A549 (cell line): ENCODE measurements at regions of chr15 and their contacts with region 1.

Region 1: DNA sequence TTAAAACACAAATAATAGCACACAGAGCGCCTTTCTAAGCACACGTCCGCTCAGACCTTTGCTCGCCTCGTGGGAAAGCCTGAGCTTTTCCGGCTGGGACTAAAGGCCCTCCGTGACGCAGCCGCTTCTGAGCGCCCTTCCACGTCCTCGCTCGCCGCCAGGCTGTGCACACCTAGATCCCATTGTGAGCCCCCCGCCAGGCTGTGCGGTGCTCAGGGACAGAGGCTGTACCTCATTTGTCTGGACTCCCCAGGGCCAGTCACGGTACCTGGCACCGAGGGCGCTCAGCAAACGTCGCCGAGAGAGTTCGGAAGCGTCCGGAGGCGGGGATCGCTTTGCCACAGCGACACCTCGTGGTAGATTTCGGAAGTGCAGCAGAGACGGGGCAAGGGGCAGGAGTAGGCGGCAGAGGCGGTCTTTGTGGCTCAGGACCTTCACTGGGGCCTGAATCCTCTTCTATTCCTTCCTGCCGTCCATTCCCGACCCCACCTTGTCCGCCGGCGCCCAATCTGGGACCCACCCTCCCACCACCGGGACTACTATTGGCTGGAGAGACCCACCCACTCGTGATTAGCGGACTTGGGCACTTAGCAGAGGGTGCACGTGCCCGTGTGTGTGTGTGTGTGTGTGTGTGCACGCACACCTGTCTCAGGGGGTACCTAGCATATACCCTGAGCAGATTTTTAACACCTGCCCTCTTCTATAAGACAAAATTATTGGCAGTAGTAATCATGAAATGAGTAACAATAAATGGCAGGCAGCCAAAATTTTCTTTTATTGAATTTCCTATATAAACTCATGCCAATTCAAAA is 65.6 kb downstream of the RHCG start:
- DNase-seq: peak; percentile 80 to 96
- ATAC-seq: peak; percentile 80 to 96
- H3K4me3 ChIP-seq: peak overlapping the region; percentile 41
- H3K27ac ChIP-seq: peak overlapping the region; percentile 69 to 81
- H3K4me1 ChIP-seq: peaks cover 27% of the 10 kb centered on the region; the same call in 2 of the 3 replicates
- CTCF ChIP-seq: peak; percentile 96
- EP300 ChIP-seq: no peak
- POLR2A ChIP-seq: 0 out of 2 replicates have a peak, but pooled peaks have one; percentile 8
- RAD21 ChIP-seq: peak; percentile 83 to 85

Region 2: GRCh38 chr15:89367485-89368451 is 63.0 kb before region 1 on chr15:
- CTCF ChIA-PET with region 1: interaction called, 369 read pairs
- POLR2A ChIA-PET with region 1: no interaction called
- DNase-seq: peak; percentile 64 to 78
- ATAC-seq: peak; percentile 20 to 70; a peak in 4 of 6 replicates
- H3K4me3 ChIP-seq: peak overlapping the region; percentile 53
- H3K27ac ChIP-seq: peak overlapping the region; percentile 32 to 62; a peak in 4 of 6 replicates
- H3K4me1 ChIP-seq: peaks cover 9% of the 10 kb centered on the region; the same call in 2 of the 3 replicates
- CTCF ChIP-seq: no peak
- EP300 ChIP-seq: no peak
- POLR2A ChIP-seq: no peak
- RAD21 ChIP-seq: no peak

Region 3: DNA sequence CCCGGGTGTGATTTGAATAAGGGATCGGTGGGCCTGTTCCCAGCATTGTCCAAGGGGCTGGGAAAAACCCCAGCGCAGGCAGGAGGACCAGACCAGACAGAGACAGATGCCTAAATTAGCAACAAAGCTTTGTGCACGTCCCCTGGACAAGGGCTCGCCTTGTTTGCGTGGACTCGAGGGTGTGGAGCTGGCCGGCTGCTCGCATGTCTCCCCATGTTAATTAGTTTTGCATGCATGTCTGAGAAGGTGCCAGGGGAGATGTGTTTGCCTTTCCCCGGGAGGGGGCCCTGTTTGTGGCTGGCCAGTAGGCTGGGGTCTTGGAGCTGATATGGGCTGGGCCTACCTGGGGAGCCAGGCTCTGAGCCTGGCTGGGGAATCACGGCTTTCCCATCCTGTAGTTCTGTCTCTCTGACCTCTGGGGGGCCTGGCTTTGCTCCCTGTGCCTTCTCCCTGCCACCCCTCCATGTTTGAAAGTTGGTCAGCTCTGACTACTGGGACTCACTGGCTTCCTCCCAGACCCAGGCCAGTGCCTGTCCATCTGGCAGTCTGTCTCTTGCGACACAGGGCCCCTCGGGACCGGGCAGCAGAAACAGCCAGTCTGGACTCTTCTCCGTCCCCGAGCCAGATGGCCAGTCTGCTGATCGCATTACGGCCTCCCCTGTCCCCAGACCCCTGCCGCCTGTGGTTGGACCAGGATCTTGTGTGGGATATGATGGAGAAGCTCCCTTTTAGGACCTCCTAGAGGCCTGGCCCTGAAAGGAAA is 40.7 kb before region 1 on chr15:
- CTCF ChIA-PET with region 1: interaction called, 12 read pairs
- POLR2A ChIA-PET with region 1: no interaction called
- DNase-seq: no peak
- ATAC-seq: no peak; a peak in 2 of 6 replicates
- H3K4me3 ChIP-seq: no peak overlapping the region
- H3K27ac ChIP-seq: no peak overlapping the region
- H3K4me1 ChIP-seq: no peaks in the 10 kb centered on the region
- CTCF ChIP-seq: no peak
- EP300 ChIP-seq: no peak
- POLR2A ChIP-seq: no peak
- RAD21 ChIP-seq: no peak

Region 4: GRCh38 chr15:89399238-89400120 is 31.3 kb before region 1 on chr15:
- CTCF ChIA-PET with region 1: interaction called, 24 read pairs
- POLR2A ChIA-PET with region 1: no interaction called
- DNase-seq: peak; percentile 84 to 90
- ATAC-seq: peak; percentile 79 to 87
- H3K4me3 ChIP-seq: peak overlapping the region; percentile 79
- H3K27ac ChIP-seq: peak overlapping the region; percentile 86 to 87
- H3K4me1 ChIP-seq: peaks cover 24% of the 10 kb centered on the region
- CTCF ChIP-seq: peak; percentile 62
- EP300 ChIP-seq: no peak
- POLR2A ChIP-seq: peak; percentile 41; the same call in 1 of the 2 replicates
- RAD21 ChIP-seq: peak; percentile 31 to 37; a peak in 2 of 5 replicates

Region 5: GRCh38 chr15:89448825-89449224 is 18.1 kb after region 1 on chr15:
- CTCF ChIA-PET with region 1: interaction called, 23 read pairs
- POLR2A ChIA-PET with region 1: no interaction called
- DNase-seq: no peak
- ATAC-seq: peak in 1 of 2 experiments; percentile 9; a peak in 1 of 6 replicates
- H3K4me3 ChIP-seq: no peak overlapping the region
- H3K27ac ChIP-seq: no peak overlapping the region
- H3K4me1 ChIP-seq: peaks cover 18% of the 10 kb centered on the region; the same call in 2 of the 3 replicates
- CTCF ChIP-seq: no peak
- EP300 ChIP-seq: no peak
- POLR2A ChIP-seq: no peak
- RAD21 ChIP-seq: no peak

Region 6: DNA sequence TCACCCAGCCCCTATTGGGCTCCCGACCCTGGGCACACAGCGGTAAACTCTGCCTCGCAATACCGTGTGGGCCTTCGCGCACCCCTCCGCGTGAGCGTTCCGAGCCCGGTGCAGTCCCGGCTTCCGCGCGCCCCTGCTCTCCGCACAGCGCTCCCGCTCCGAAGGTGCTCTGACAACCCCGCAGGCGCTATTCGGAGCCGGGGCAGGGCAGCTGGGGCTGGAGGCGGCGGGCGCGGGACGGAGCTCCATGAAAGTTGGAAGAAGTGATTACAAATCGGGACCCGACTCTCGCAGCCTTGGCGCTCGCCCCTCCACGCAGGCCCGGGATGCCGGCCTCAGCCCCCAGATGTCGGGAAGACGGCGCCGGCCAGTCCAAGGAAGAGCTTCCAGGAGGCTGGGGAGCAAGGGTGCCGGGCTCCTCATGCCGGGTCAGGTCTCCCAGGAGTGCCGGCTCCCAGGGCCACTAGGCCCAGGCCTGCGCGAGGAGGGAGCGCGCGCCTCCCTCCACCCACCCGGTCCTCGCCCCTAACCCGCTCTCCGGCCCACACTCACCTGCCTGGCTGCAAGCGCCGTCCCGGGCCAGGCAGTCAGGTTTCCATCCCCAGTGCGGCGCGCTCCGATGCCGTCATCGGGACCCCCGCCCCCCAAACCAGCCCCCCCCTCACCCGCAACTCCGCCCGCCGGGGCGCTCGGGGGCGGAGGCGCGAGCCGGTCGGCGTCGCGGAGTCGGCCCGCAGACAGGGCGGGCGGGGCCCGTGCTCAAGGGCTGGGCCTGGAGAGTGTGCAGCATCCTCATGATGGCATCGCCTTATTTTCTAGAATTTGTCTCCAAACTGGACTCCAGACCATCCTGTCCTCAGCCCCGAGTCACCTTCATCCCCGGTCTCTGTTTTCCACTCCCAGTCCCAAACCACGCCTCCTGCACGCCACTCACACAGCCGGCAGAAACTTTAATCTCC is 224.4 kb after region 1 on chr15 and contains the start of gene KIF7:
- CTCF ChIA-PET with region 1: no interaction called
- POLR2A ChIA-PET with region 1: no interaction called
- DNase-seq: peak; percentile 42 to 60
- ATAC-seq: peak; percentile 69 to 88
- H3K4me3 ChIP-seq: peak within 1 kb of the TSS; percentile 71
- H3K27ac ChIP-seq: peak within 1 kb of the TSS; percentile 73 to 87
- H3K4me1 ChIP-seq: peaks cover 4% of the 10 kb centered on the region; the same call in 1 of the 3 replicates
- CTCF ChIP-seq: no peak
- EP300 ChIP-seq: no peak
- POLR2A ChIP-seq: peak; percentile 42
- RAD21 ChIP-seq: no peak
- polyA plus RNA-seq, gene KIF7: 2.1 and 2.2 TPM in 2 replicates